Activated CD4-positive, alpha-beta T cell treated with anti-CD3 and anti-CD28 coated beads for 36 hours (primary cell): ENCODE measurements at regions of chr22 and their contacts with region 1.

Region 1: DNA sequence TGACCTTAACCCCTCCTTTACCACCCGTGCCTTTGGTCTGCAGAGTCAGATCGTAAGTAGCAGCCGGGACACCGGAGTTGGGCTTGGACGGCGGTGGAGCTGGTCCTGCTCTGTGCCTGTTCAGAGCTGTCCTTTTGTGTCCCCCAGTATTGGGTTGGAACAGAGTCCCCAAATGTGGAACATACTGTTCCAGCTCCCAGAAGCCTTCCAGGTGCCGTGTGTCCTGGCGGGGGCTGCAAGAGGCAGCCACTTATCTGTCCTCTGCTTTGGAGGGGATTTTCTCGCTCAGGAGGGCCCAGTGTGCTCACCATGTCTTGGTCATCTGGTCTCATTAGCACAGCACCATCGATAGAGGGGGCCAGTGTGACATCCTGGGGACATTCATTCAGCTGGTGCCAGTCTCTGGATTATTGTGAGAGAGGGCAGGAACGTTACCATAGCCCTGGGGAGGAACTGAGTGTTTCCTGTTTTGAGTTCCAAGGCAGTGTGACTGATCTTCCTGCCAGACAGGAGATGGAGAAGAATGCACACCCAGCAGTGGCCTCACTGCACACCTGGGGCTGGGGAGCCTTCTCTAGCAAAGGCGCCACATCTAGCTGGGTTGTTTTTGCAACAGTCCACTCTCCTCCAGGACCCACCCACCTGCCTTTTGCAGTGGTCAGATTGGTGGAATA is 12.4 kb downstream of the CRELD2 start:
- DNase-seq: peak; percentile 77
- ATAC-seq: peak; percentile 47
- H3K4me3 Mint-ChIP-seq: peak overlapping the region; percentile 22
- H3K27ac Mint-ChIP-seq: peak overlapping the region; percentile 34
- H3K4me1 Mint-ChIP-seq: peaks cover 43% of the 10 kb centered on the region
- H3K27me3 Mint-ChIP-seq: no peaks in the 10 kb centered on the region

Region 2: DNA sequence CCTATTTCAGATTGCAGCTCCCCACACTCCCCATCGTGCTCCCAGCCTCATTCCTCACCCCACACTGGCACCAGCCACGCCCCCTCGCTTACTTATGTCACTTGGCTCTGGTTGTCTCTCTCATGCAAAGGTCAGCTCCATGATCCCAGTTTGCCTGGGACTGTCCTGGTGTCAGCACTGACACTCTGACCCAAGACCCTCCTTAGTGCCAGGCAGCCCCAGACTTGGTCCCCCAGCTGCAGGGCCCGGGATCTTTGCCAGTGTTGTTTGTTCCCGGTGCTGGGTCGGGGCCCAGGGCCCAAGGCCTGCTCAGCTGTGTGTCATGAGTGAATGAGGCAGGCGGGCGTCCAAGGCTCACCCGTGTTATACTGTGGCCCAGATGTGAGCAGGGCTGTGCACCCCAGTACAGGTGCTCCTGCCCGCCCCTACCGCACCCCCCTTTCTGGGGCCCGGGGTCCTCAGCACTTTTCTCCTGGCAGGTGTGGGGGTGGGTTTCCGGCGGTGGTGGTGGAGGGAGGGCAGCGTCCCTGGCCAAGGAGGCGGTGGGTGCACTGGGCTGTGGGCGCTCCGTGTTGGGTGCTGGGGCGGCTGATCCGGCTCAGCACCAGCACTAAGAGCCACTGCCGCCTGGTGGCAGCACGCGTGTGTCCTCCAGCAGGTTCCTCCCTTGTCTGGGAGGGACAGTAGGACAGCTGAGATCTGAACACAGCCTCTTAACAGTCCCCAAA is 62.2 kb after region 1 on chr22:
- CTCF ChIA-PET with region 1: interaction called, 8 read pairs
- POLR2A ChIA-PET with region 1: no interaction called
- intact Hi-C with region 1: loop called (anchors 1 kb)
- DNase-seq: peak; percentile 87
- ATAC-seq: peak; percentile 98
- H3K4me3 Mint-ChIP-seq: no peak overlapping the region
- H3K27ac Mint-ChIP-seq: peak overlapping the region; percentile 53
- H3K4me1 Mint-ChIP-seq: peaks cover 5% of the 10 kb centered on the region
- H3K27me3 Mint-ChIP-seq: no peaks in the 10 kb centered on the region

Region 3: GRCh38 chr22:50148991-50149721 is 218.3 kb after region 1 on chr22:
- CTCF ChIA-PET with region 1: no interaction called
- POLR2A ChIA-PET with region 1: no interaction called
- intact Hi-C with region 1: loop called in 1 of 2 experiments (anchors 1 kb)
- DNase-seq: peak; percentile 86
- ATAC-seq: peak; percentile 98
- H3K4me3 Mint-ChIP-seq: no peak overlapping the region
- H3K27ac Mint-ChIP-seq: no peak overlapping the region
- H3K4me1 Mint-ChIP-seq: no peaks in the 10 kb centered on the region
- H3K27me3 Mint-ChIP-seq: peaks cover 3% of the 10 kb centered on the region

Region 4: DNA sequence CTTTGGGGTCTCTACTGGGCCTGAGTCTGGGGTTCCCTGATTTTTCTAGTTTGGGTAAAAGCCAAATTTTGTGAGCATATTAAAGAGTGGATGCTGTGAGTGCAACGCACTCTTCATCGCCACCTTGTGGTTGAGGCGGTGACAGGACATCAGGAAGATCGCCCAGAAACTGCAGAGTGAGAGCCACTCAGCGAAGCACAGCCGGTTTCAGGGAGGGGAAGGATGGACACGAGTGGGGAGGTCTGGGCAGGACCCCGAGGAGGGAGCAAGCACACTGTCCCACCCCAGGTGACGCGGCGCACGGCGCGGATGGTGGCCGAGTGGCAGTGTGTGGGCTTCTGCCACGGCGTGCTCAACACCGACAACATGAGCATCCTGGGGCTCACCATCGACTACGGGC is 279.0 kb after region 1 on chr22:
- CTCF ChIA-PET with region 1: no interaction called
- POLR2A ChIA-PET with region 1: no interaction called
- intact Hi-C with region 1: loop called in 1 of 2 experiments (anchors 1 kb)
- DNase-seq: peak; percentile 85
- ATAC-seq: peak; percentile 86
- H3K4me3 Mint-ChIP-seq: no peak overlapping the region
- H3K27ac Mint-ChIP-seq: no peak overlapping the region
- H3K4me1 Mint-ChIP-seq: peaks cover 5% of the 10 kb centered on the region
- H3K27me3 Mint-ChIP-seq: no peaks in the 10 kb centered on the region